PC-9 (cell line): ENCODE measurements at regions of chr9 and their contacts with region 1.

Region 1: DNA sequence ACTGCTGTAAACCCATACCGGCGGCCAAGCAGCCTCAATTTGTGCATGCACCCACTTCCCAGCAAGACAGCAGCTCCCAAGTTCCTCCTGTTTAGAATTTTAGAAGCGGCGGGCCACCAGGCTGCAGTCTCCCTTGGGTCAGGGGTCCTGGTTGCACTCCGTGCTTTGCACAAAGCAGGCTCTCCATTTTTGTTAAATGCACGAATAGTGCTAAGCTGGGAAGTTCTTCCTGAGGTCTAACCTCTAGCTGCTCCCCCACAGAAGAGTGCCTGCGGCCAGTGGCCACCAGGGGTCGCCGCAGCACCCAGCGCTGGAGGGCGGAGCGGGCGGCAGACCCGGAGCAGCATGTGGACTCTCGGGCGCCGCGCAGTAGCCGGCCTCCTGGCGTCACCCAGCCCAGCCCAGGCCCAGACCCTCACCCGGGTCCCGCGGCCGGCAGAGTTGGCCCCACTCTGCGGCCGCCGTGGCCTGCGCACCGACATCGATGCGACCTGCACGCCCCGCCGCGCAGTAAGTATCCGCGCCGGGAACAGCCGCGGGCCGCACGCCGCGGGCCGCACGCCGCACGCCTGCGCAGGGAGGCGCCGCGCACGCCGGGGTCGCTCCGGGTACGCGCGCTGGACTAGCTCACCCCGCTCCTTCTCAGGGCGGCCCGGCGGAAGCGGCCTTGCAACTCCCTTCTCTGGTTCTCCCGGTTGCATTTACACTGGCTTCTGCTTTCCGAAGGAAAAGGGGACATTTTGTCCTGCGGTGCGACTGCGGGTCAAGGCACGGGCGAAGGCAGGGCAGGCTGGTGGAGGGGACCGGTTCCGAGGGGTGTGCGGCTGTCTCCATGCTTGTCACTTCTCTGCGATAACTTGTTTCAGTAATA is at the start of gene FXN:
- DNase-seq: peak; percentile 48 to 85
- H3K4me3 ChIP-seq: peak within 1 kb of the TSS; percentile 93
- H3K27ac ChIP-seq: 0 out of 2 replicates have a peak within 1 kb of the TSS, but pooled peaks have one; percentile 21
- H3K4me1 ChIP-seq: 0 out of 2 replicates have a peak, but pooled peaks cover 10% of the 10 kb centered on the region
- H3K27me3 ChIP-seq: no peaks in the 10 kb centered on the region
- CTCF ChIP-seq: peak; percentile 92
- total RNA-seq, gene FXN: 12.0 and 19.5 TPM in 2 replicates

Region 2: DNA sequence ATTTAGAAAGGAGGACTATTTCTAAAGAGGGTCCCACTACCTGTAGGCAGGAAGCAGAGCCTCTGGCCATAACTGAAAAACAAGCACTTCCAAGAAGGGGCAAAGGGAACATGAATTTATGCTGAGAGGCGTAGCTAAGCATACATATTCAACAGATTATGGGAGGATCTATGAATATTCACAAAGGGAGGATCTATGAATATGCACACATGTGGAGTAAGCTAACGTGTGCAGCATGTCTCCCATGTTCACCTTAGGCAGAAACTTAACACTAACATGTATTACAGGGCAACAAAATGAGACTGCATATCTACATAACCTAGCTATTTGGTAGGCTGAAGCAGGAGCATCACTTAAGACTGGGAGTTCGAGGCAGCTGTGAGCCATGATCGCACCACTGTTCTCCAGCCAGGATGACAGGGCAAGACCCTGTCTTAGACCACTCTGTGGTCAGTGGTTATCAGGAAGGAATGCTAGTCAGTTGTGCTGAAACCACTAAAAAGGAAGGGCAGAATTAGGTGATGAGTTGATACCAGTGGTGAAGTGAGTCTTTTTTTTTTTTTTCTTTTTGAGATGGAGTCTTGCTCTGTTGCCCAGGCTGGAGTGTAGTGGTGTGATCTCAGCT is 20.6 kb after region 1 on chr9:
- CTCF ChIA-PET with region 1: no interaction called
- POLR2A ChIA-PET with region 1: no interaction called
- intact Hi-C with region 1: no loop called
- DNase-seq: no peak
- H3K4me3 ChIP-seq: no peak overlapping the region
- H3K27ac ChIP-seq: no peak overlapping the region
- H3K4me1 ChIP-seq: no peaks in the 10 kb centered on the region
- H3K27me3 ChIP-seq: no peaks in the 10 kb centered on the region
- CTCF ChIP-seq: no peak

Region 3: GRCh38 chr9:69097064-69097463 is 61.4 kb after region 1 on chr9:
- CTCF ChIA-PET with region 1: interaction called, 14 read pairs
- POLR2A ChIA-PET with region 1: no interaction called
- intact Hi-C with region 1: no loop called
- DNase-seq: peak; percentile 20 to 94
- H3K4me3 ChIP-seq: no peak overlapping the region
- H3K27ac ChIP-seq: peak overlapping the region; percentile 79
- H3K4me1 ChIP-seq: peaks cover 30% of the 10 kb centered on the region
- H3K27me3 ChIP-seq: no peaks in the 10 kb centered on the region
- CTCF ChIP-seq: no peak

Region 4: GRCh38 chr9:69186841-69187611 is 151.4 kb after region 1 on chr9:
- CTCF ChIA-PET with region 1: no interaction called
- POLR2A ChIA-PET with region 1: no interaction called
- intact Hi-C with region 1: loop called (anchors 5 kb)
- DNase-seq: peak; percentile 36 to 86
- H3K4me3 ChIP-seq: peak overlapping the region; percentile 38
- H3K27ac ChIP-seq: peak overlapping the region; percentile 89
- H3K4me1 ChIP-seq: peaks cover 65% of the 10 kb centered on the region
- H3K27me3 ChIP-seq: no peaks in the 10 kb centered on the region
- CTCF ChIP-seq: no peak

Region 5: GRCh38 chr9:69385581-69386033 is 349.9 kb after region 1 on chr9:
- CTCF ChIA-PET with region 1: interaction called, 3 read pairs
- POLR2A ChIA-PET with region 1: no interaction called
- intact Hi-C with region 1: loop called (anchors 10 kb)
- DNase-seq: peak; percentile 54 to 69
- H3K4me3 ChIP-seq: no peak overlapping the region
- H3K27ac ChIP-seq: no peak overlapping the region
- H3K4me1 ChIP-seq: peaks cover 44% of the 10 kb centered on the region
- H3K27me3 ChIP-seq: no peaks in the 10 kb centered on the region
- CTCF ChIP-seq: no peak

Region 6: DNA sequence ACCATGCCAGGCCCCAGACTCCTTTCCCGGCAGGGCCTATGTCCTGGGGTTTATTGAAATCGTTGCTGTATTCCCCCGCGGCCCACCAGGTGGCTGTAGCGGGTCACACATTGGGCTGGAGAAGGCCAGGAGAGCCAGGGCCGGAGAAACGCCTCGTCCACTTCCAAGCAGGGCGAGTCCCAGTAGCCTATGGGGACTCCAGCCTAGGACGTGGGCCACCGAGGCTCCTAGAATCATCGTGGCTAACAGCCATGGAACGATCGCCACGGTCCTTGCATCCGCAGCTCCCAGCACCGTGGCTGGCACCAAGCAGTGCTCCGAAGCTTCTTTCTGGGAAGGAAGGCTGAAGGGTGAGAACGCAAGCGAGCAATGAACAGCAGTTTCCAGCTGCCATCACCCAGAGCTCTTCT is 377.1 kb after region 1 on chr9:
- CTCF ChIA-PET with region 1: no interaction called
- POLR2A ChIA-PET with region 1: no interaction called
- intact Hi-C with region 1: loop called (anchors 5 kb)
- DNase-seq: peak in 1 of 2 experiments; percentile 66
- H3K4me3 ChIP-seq: no peak overlapping the region
- H3K27ac ChIP-seq: no peak overlapping the region
- H3K4me1 ChIP-seq: no peaks in the 10 kb centered on the region
- H3K27me3 ChIP-seq: no peaks in the 10 kb centered on the region
- CTCF ChIP-seq: peak; percentile 65

Region 7: DNA sequence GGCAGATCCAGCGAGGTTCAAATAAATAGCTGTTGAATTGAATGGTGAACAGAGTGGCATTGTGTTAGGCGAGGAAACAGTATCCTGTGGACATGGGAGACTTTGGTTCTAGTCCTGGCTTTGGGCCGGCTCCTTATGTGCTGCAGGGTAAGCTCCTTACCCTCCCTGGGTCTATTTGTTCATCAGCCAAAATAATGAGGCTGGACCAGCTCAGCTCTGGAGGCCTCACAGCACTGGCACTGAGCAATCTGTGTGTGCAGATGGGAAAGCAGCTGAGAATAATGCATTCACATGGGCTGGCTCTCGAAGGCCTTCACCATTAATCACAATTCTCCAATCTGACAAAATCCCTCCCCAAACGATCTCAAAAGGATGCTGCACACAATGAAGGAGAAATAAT is 554.6 kb after region 1 on chr9:
- CTCF ChIA-PET with region 1: no interaction called
- POLR2A ChIA-PET with region 1: no interaction called
- intact Hi-C with region 1: no loop called
- DNase-seq: no peak
- H3K4me3 ChIP-seq: no peak overlapping the region
- H3K27ac ChIP-seq: no peak overlapping the region
- H3K4me1 ChIP-seq: no peaks in the 10 kb centered on the region
- H3K27me3 ChIP-seq: no peaks in the 10 kb centered on the region
- CTCF ChIP-seq: no peak